K562 (cell line): ENCODE measurements at regions of chr12 and their contacts with region 1.

Region 1: GRCh38 chr12:122951979-122952892 is 14.0 kb downstream of the ABCB9 start:
- DNase-seq: peak in 3 of 4 experiments; percentile 60 to 82 (median 80)
- ATAC-seq: peak; percentile 99
- H3K4me3 ChIP-seq: no peak overlapping the region
- H3K27ac ChIP-seq: no peak overlapping the region
- H3K4me1 ChIP-seq: peaks cover 2 to 18% of the 10 kb centered on the region in 2 experiments; a peak in 4 of 5 replicates
- H3K27me3 ChIP-seq: no peaks in the 10 kb centered on the region
- CTCF ChIP-seq: peak; percentile 91 to 95 (median 95)
- EP300 ChIP-seq: no peak
- POLR2A ChIP-seq: no peak
- RAD21 ChIP-seq: peak; percentile 96

Region 2: GRCh38 chr12:122642009-122642408 is 310.2 kb before region 1 on chr12:
- CTCF ChIA-PET with region 1: interaction called, 10 read pairs
- POLR2A ChIA-PET with region 1: no interaction called
- in situ Hi-C with region 1: no loop called
- intact Hi-C with region 1: no loop called
- DNase-seq: no peak
- ATAC-seq: no peak
- H3K4me3 ChIP-seq: no peak overlapping the region
- H3K27ac ChIP-seq: no peak overlapping the region
- H3K4me1 ChIP-seq: peaks cover 0 to 8% of the 10 kb centered on the region in 2 experiments; a peak in 2 of 5 replicates
- H3K27me3 ChIP-seq: no peaks in the 10 kb centered on the region
- CTCF ChIP-seq: no peak
- EP300 ChIP-seq: no peak
- POLR2A ChIP-seq: no peak
- RAD21 ChIP-seq: no peak

Region 3: GRCh38 chr12:122793685-122794106 is 158.5 kb before region 1 on chr12:
- CTCF ChIA-PET with region 1: interaction called, 11 read pairs
- POLR2A ChIA-PET with region 1: no interaction called
- in situ Hi-C with region 1: loop called (anchors 5 kb)
- intact Hi-C with region 1: loop called (anchors 5 kb)
- DNase-seq: peak; percentile 70 to 72 (median 70)
- ATAC-seq: peak; percentile 85
- H3K4me3 ChIP-seq: no peak overlapping the region
- H3K27ac ChIP-seq: no peak overlapping the region
- H3K4me1 ChIP-seq: peaks cover 4 to 5% of the 10 kb centered on the region in 2 experiments; a peak in 2 of 5 replicates
- H3K27me3 ChIP-seq: no peaks in the 10 kb centered on the region
- CTCF ChIP-seq: peak; percentile 56 to 86 (median 82); a peak in 5 of 6 replicates
- EP300 ChIP-seq: peak; percentile 57; the same call in 1 of the 2 replicates
- POLR2A ChIP-seq: no peak
- RAD21 ChIP-seq: peak; percentile 48 to 80; a peak in 3 of 4 replicates

Region 4: GRCh38 chr12:122834104-122834920 is 117.9 kb before region 1 on chr12:
- CTCF ChIA-PET with region 1: no interaction called
- POLR2A ChIA-PET with region 1: no interaction called
- in situ Hi-C with region 1: no loop called
- intact Hi-C with region 1: no loop called
- DNase-seq: peak in 2 of 4 experiments; percentile 43 to 46
- ATAC-seq: 0 out of 3 replicates have a peak, but pooled peaks have one; percentile 13
- H3K4me3 ChIP-seq: peak overlapping the region; percentile 60; the same call in 1 of the 2 replicates
- H3K27ac ChIP-seq: no peak overlapping the region
- H3K4me1 ChIP-seq: peaks cover 21 to 22% of the 10 kb centered on the region in 2 experiments
- H3K27me3 ChIP-seq: no peaks in the 10 kb centered on the region
- CTCF ChIP-seq: peak in 1 of 3 experiments; percentile 5; a peak in 1 of 6 replicates
- EP300 ChIP-seq: no peak
- POLR2A ChIP-seq: no peak
- RAD21 ChIP-seq: no peak

Region 5: DNA sequence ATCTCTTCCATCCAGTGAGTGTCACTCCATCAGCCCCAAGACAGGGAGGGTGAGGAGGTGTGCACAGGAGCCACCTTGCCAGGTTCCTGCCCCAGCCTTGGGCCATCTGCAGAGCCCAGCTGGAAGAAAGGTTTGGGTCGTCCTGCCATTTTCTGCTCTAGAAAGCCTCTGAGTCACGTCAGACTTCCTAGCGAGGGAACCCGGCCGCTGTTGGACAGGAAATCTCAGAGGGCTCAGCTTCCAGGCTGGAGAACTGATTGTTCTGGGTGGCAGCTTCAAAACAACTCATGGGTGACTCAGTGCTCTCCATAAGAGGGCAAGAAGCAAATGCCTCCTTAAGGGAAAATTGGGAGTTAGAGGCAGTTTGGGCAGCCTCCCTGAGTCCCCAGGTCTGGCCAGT is 100.4 kb before region 1 on chr12:
- CTCF ChIA-PET with region 1: no interaction called
- POLR2A ChIA-PET with region 1: interaction called, 4 read pairs
- in situ Hi-C with region 1: loop called (anchors 10 kb)
- intact Hi-C with region 1: no loop called
- DNase-seq: no peak
- ATAC-seq: no peak
- H3K4me3 ChIP-seq: no peak overlapping the region
- H3K27ac ChIP-seq: no peak overlapping the region
- H3K4me1 ChIP-seq: peaks cover 0 to 24% of the 10 kb centered on the region in 2 experiments; a peak in 2 of 5 replicates
- H3K27me3 ChIP-seq: no peaks in the 10 kb centered on the region
- CTCF ChIP-seq: no peak
- EP300 ChIP-seq: no peak
- POLR2A ChIP-seq: no peak
- RAD21 ChIP-seq: no peak

Region 6: DNA sequence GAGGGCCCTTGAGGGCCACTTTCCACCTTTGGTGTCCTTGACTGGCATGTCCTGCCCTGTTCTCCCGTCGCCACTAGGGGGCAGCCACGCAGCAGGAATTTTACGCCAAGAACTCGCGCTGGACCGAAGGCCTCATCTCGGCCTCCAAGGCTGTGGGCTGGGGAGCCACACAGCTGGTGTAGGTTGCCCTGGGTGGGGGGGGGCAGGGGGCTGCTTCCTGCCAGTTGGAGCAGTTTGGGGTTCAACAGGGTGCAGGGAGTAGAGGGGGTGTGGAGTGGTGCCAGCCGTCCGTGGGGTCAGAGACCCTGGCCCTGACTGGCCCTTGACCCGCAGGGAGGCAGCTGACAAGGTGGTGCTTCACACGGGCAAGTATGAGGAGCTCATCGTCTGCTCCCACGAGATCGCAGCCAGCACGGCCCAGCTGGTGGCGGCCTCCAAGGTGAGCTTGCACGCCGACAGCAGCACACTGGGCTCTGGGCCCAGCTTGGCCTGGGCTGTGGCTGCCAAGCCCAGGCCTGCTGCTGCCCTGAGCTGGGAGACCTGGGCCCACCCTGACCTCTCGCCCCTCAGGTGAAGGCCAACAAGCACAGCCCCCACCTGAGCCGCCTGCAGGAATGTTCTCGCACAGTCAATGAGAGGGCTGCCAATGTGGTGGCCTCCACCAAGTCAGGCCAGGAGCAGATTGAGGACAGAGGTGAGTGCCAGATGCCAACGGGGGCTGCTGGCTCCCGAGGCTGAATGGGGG is 91.7 kb before region 1 on chr12:
- CTCF ChIA-PET with region 1: interaction called, 28 read pairs
- POLR2A ChIA-PET with region 1: interaction called, 6 read pairs
- in situ Hi-C with region 1: loop called (anchors 10 kb)
- intact Hi-C with region 1: loop called (anchors 1 kb)
- DNase-seq: peak; percentile 73 to 87 (median 80)
- ATAC-seq: peak; percentile 91
- H3K4me3 ChIP-seq: no peak overlapping the region
- H3K27ac ChIP-seq: no peak overlapping the region
- H3K4me1 ChIP-seq: peaks cover 0 to 54% of the 10 kb centered on the region in 2 experiments; a peak in 2 of 5 replicates
- H3K27me3 ChIP-seq: no peaks in the 10 kb centered on the region
- CTCF ChIP-seq: peak; percentile 86 to 90 (median 90)
- EP300 ChIP-seq: no peak
- POLR2A ChIP-seq: no peak
- RAD21 ChIP-seq: peak; percentile 85 to 95

Region 7: GRCh38 chr12:122880668-122881067 is 71.6 kb before region 1 on chr12:
- CTCF ChIA-PET with region 1: no interaction called
- POLR2A ChIA-PET with region 1: interaction called, 3 read pairs
- in situ Hi-C with region 1: no loop called
- intact Hi-C with region 1: loop called (anchors 5 kb)
- DNase-seq: peak in 1 of 4 experiments; percentile 49
- ATAC-seq: peak; percentile 91
- H3K4me3 ChIP-seq: no peak overlapping the region
- H3K27ac ChIP-seq: no peak overlapping the region
- H3K4me1 ChIP-seq: peaks cover 3 to 17% of the 10 kb centered on the region in 2 experiments; a peak in 4 of 5 replicates
- H3K27me3 ChIP-seq: no peaks in the 10 kb centered on the region
- CTCF ChIP-seq: peak; percentile 53 to 60 (median 58); a peak in 5 of 6 replicates
- EP300 ChIP-seq: no peak
- POLR2A ChIP-seq: no peak
- RAD21 ChIP-seq: peak; percentile 41 to 66

Region 8: DNA sequence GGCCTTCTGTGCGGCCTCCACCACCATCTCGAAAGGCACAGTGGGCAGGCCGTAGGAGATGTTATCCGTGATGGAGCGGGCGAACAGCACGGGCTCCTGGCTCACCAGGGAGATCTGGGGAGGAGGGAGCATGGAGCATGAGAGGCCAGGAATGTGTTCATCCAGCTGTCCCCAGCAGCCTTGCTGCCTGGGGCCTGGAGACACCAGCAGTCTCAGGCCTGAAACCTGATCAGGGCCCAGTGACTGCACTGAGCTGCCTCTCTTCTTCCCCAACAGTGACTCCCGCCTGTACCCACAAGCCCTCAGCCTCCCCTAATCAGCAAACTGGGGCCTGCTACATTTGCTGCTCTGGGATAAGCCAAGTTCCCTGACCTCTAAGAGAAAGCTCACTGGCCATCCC is 16.9 kb before region 1 on chr12:
- CTCF ChIA-PET with region 1: no interaction called
- POLR2A ChIA-PET with region 1: no interaction called
- in situ Hi-C with region 1: no loop called
- intact Hi-C with region 1: no loop called
- DNase-seq: peak in 1 of 4 experiments; percentile 21
- ATAC-seq: peak; percentile 62
- H3K4me3 ChIP-seq: no peak overlapping the region
- H3K27ac ChIP-seq: peak overlapping the region; percentile 28; the same call in 1 of the 3 replicates
- H3K4me1 ChIP-seq: peaks cover 0 to 10% of the 10 kb centered on the region in 2 experiments; a peak in 3 of 5 replicates
- H3K27me3 ChIP-seq: no peaks in the 10 kb centered on the region
- CTCF ChIP-seq: no peak
- EP300 ChIP-seq: no peak
- POLR2A ChIP-seq: no peak
- RAD21 ChIP-seq: no peak

Region 9: GRCh38 chr12:123006977-123007376 is 54.7 kb after region 1 on chr12:
- CTCF ChIA-PET with region 1: no interaction called
- POLR2A ChIA-PET with region 1: no interaction called
- in situ Hi-C with region 1: no loop called
- intact Hi-C with region 1: no loop called
- DNase-seq: no peak
- ATAC-seq: no peak
- H3K4me3 ChIP-seq: no peak overlapping the region
- H3K27ac ChIP-seq: no peak overlapping the region
- H3K4me1 ChIP-seq: peaks cover 0 to 3% of the 10 kb centered on the region in 2 experiments; a peak in 2 of 5 replicates
- H3K27me3 ChIP-seq: no peaks in the 10 kb centered on the region
- CTCF ChIP-seq: no peak
- EP300 ChIP-seq: no peak
- POLR2A ChIP-seq: no peak
- RAD21 ChIP-seq: no peak